ENCODE measurements at regions of chr17 and their contacts with region 1.

Region 1: DNA sequence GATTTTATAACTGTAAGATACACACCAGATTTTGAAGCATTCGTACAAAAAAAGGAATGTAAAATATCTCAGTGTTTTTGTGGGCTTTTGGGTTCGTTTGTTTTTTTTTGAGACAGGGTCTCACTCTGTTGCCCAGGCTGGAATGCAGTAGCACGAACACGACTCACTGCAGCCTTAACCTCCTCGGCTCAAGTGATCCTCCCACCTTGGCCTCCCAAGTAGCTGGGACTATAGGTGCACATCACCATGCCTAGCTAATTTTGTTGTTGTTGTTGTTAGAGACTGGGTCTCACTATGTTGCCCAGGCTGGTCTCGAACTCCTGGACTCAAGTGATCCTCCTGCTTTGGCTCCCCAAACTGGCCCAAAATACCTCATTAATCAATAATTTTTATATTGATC is 15.9 kb downstream of the STAT5B start:
- H3K4me3 ChIP-seq: no peak overlapping the region
- H3K27ac ChIP-seq: no peak overlapping the region
- H3K4me1 ChIP-seq: peaks cover 19% of the 10 kb centered on the region
- CTCF ChIP-seq: no peak

Region 2: DNA sequence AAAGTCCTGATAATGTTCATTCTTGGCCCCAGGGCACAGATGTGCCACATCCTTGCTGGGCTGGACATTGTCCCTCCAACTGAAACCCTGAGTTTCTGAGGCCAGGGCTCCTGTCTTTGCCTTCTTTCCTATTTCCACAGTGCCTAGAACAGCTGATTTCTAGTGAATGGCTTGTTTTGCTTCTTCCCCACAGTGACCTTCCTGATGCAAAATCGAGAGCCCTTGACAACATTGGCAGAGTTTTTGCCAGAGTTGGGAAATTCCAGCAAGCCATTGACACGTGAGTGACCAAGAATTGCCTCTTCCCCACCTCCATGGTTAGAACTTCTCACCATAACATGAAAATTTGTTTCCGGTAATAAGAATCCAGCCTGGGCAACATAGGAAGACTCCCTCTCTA is 315.4 kb before region 1 on chr17:
- CTCF ChIA-PET with region 1: interaction called, 12 read pairs
- POLR2A ChIA-PET with region 1: no interaction called
- H3K4me3 ChIP-seq: no peak overlapping the region
- H3K27ac ChIP-seq: no peak overlapping the region
- H3K4me1 ChIP-seq: no peaks in the 10 kb centered on the region
- CTCF ChIP-seq: no peak

Measured in HEK293 (cell line).